ENCODE measurements at regions of chr14 and their contacts with region 1.

Region 1: DNA sequence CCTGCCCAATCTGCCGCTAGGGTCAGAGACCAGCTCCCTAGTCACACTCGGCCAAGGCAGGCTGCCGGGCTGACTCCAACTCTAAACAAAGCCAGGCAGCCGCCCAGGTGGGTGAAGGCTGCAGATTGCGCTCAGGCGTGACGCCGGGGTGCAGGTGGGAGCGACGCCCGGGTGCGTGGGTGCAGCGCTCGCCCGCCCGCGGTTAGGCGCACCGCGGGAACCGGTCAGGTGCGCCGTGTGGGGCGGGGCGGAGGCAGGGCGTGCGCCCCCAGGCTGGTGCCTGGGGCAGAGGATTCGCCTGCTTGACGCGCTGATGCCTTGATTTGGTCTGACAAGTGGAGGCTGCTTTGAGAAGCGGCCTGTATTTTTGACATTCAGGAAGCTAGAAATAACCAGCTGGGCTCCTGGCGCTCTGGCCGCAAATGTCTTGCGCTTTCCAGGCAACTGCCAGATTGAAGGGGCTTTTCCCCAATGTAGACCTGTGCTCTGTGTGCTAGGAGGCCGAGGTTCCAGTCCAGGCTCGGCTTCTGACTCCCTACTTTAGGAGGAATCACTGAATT is 126.7 kb upstream of the HIF1A start:
- DNase-seq: peak; percentile 69
- H3K4me3 Mint-ChIP-seq: peak overlapping the region; percentile 67
- H3K27ac Mint-ChIP-seq: peak overlapping the region; percentile 85
- H3K4me1 Mint-ChIP-seq: peaks cover 75% of the 10 kb centered on the region
- H3K27me3 Mint-ChIP-seq: no peaks in the 10 kb centered on the region
- CTCF ChIP-seq: peak; percentile 7

Region 2: GRCh38 chr14:61537563-61538463 is 30.8 kb before region 1 on chr14:
- CTCF ChIA-PET with region 1: interaction called, 5 read pairs
- POLR2A ChIA-PET with region 1: interaction called, 103 read pairs
- intact Hi-C with region 1: loop called (anchors 1 kb)
- DNase-seq: peak; percentile 97
- H3K4me3 Mint-ChIP-seq: peak overlapping the region; percentile 10
- H3K27ac Mint-ChIP-seq: peak overlapping the region; percentile 88
- H3K4me1 Mint-ChIP-seq: peaks cover 32% of the 10 kb centered on the region
- H3K27me3 Mint-ChIP-seq: no peaks in the 10 kb centered on the region
- CTCF ChIP-seq: no peak

Region 3: DNA sequence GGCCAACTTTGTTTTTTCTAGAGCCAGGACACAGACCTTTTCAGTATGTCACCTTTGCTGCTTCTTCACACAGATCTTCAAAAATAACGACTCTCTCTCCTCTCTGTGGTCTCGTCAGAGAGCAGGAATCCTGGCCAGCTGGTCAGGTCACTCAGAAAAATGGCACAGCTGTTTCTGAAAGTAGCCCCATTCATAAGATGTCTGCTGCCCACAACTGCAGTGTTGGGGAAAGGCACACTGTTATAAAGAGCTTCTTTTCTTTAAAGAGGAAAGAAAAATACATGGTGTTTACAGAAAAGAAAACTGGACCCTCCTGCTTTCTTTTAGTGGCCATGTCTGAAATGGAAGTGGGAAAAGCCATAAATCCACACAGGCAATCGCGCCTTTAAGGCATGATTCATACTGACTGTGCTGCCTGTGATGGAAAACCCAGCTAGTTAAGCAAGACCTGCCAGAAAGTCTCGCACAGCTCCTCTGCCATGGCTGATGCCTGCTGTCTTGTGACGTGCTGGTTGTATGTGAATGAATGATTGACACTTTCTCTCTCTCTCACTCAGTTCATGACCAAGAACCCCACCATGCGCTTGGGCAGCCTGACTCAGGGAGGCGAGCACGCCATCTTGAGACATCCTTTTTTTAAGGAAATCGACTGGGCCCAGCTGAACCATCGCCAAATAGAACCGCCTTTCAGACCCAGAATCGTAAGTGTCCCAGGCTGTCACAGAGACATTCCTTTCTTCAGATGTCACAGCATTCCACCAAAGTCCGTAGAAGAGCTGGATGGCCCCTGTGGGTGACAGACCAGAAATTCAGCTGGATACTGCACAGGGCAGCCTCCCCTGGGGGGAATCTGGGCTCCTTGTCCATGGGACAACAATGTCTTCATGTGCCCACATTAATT is 21.2 kb before region 1 on chr14:
- CTCF ChIA-PET with region 1: interaction called, 7 read pairs
- POLR2A ChIA-PET with region 1: interaction called, 13 read pairs
- intact Hi-C with region 1: no loop called
- DNase-seq: peak; percentile 86
- H3K4me3 Mint-ChIP-seq: no peak overlapping the region
- H3K27ac Mint-ChIP-seq: peak overlapping the region; percentile 69
- H3K4me1 Mint-ChIP-seq: peaks cover 20% of the 10 kb centered on the region
- H3K27me3 Mint-ChIP-seq: no peaks in the 10 kb centered on the region
- CTCF ChIP-seq: no peak

Region 4: DNA sequence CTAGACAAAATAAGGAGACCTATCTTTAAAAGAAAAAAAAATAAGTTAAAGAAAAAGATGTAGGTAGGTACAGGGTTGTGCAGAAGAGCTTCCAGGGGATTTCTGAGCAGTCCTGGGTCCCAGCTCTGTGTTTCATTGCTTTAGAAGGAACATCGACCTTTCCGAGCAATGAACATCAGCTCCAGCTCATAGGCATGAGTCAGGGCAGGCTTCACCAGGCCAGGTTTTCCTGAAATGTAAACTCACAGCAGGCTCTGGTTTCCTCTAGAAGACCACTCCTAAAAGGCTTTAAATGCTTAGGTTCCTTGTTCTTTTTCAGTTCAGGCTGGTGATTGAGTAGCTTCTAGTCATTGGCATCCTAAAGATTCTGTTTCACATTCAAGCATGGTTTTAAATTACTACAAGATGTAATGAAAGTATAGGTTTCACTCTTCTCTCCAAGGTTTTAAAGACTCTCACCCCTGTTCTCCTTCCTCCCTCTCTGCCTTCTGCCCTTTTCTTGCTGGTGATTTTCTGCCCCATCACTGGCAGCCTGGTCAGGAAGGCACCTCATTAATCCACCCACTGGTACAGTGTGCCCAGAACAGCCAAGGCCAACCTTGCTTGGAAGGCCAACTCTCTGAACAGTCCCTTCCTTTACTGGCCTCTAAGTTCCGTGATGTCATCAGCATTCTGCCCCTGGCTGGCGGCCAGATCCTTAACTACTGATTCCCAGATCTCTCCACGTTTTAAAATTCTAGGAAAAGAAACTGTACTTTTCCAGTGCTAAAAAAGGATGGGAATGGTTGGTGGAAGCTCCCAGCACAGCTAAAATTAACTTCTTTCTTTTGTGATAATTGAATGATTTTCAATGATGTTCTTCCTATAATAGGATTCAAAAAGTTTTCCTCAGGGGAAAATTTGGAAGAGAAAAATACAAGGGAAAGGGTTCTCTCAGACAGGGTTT is 17.2 kb after region 1 on chr14:
- CTCF ChIA-PET with region 1: interaction called, 3 read pairs
- POLR2A ChIA-PET with region 1: interaction called, 37 read pairs
- intact Hi-C with region 1: no loop called
- DNase-seq: peak; percentile 77
- H3K4me3 Mint-ChIP-seq: no peak overlapping the region
- H3K27ac Mint-ChIP-seq: peak overlapping the region; percentile 65
- H3K4me1 Mint-ChIP-seq: peaks cover 35% of the 10 kb centered on the region
- H3K27me3 Mint-ChIP-seq: no peaks in the 10 kb centered on the region
- CTCF ChIP-seq: no peak

Region 5: DNA sequence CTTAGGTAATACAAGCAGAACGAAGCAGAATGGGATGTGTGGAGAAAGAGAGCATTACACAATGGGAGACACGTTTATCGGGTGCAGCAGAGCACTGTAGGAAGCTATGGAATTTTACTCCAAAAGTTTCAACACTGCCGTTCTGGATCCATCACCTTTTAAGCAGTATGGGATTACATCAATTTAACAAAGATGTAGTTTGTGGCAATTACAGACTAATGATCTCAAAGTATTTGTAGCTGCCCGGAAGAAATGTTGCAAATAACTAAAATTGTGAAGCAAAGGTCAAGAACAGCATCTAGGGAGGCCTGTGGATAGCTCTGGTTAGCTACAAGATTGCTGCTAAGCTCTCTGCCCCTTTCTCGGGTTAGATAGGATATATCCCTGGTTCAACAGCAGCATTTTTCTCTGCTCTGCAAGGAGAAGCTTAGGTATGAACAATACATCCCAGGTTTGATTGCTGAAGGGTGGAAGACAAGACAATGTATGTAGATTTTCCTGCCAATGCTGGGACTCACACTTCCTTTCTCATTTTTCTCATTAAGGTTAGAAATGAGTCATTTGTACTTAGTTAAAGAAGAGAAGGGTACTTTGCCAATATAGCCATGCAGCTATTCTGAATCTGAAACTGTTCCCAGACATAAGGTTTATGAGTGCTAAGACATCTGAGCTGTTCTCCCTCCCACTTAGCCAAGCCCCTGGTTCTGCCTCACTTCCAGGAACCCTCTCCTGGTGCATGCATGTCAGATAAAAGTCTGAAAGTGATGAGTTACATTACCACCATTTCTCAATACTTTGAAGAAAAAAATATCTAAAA is 51.7 kb after region 1 on chr14:
- CTCF ChIA-PET with region 1: no interaction called
- POLR2A ChIA-PET with region 1: interaction called, 16 read pairs
- intact Hi-C with region 1: no loop called
- DNase-seq: peak; percentile 90
- H3K4me3 Mint-ChIP-seq: no peak overlapping the region
- H3K27ac Mint-ChIP-seq: peak overlapping the region; percentile 69
- H3K4me1 Mint-ChIP-seq: peaks cover 30% of the 10 kb centered on the region
- H3K27me3 Mint-ChIP-seq: no peaks in the 10 kb centered on the region
- CTCF ChIP-seq: no peak

Region 6: DNA sequence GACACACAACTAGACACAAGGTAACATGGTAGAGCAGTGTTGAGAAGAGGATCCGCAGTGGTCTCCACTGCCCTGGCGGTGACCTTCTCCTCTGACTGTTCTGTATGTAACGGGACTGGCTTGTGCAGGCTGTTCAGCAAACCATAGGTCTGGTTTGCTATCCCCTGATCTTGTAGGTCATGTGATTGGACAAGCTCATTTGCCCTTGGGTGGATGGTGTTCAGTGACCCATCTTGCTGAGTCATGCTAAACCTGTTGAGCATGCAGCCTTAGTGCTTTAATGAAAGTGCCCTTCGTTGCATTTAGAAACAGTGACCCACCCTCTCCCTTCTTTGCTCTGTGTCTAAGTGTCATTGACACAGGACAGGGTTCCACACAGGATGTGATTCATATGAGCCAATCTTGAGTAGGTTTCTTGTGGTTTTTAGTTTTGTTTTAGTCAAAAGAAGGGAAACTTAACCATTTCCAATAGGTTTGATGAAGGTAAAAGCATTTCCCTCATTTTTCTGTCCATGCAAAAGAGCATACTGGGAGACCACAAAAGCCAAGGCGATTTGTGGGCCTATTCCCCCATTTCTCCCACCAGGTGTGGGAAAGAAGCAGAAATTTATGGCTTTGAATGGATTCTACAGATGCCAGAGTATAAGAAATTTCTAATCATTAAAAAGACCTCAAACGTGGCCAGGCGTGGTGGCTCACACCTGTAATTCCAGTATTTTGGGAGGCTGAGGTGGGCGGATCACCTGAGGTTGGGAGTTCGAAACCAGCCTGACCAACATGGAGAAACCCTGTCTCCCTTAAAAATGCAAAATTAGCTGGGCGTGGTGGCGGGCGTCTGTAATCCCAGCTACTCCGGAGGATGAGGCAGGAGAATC is 94.0 kb after region 1 on chr14:
- CTCF ChIA-PET with region 1: interaction called, 3 read pairs
- POLR2A ChIA-PET with region 1: interaction called, 18 read pairs
- intact Hi-C with region 1: no loop called
- DNase-seq: peak; percentile 80
- H3K4me3 Mint-ChIP-seq: peak overlapping the region; percentile 31
- H3K27ac Mint-ChIP-seq: peak overlapping the region; percentile 85
- H3K4me1 Mint-ChIP-seq: peaks cover 29% of the 10 kb centered on the region
- H3K27me3 Mint-ChIP-seq: no peaks in the 10 kb centered on the region
- CTCF ChIP-seq: no peak

Measured in MCF 10A (cell line).